ENCODE measurements at regions of chr5 and their contacts with region 1.

Region 1: DNA sequence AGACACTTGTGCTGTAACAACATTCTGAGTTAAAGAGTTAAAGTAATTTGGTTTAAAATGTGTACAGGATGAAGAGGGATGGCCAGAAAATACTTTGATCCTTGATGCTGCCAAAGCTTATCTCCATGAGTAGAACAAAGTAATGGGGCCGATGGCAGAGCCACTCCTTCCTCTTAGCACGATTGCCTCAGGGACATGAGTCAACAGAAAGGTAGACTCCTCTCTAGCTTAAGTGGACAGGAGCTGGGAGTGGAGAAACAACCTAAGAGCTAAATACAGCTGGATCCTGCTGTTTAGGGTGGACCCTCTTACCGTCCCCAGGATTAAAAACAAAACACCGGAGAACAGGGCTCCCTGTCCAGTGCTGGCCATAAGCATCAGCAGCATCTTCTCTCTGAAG is 267.3 kb downstream of the IRX1 start:
- DNase-seq: no peak
- ATAC-seq: no peak

Region 2: GRCh38 chr5:3818624-3819023 is 44.3 kb before region 1 on chr5:
- intact Hi-C with region 1: loop called (anchors 2 kb)
- DNase-seq: no peak
- ATAC-seq: no peak

Region 3: GRCh38 chr5:3896098-3896497 is 33.2 kb after region 1 on chr5:
- intact Hi-C with region 1: no loop called
- DNase-seq: no peak
- ATAC-seq: no peak

Region 4: GRCh38 chr5:4142842-4143241 is 279.9 kb after region 1 on chr5:
- intact Hi-C with region 1: no loop called
- DNase-seq: no peak
- ATAC-seq: no peak